Common myeloid progenitor, CD34-positive (primary cell): ENCODE measurements at regions of chr6 and their contacts with region 1.

Region 1: GRCh38 chr6:25053875-25054371 is 118.2 kb upstream of the RIPOR2 start:
- DNase-seq: peak in 2 of 3 donors; percentile 71 to 77
- H3K4me3 ChIP-seq: peak overlapping the region in 2 of 7 experiments; percentile 4 to 23
- H3K27ac ChIP-seq: no peak overlapping the region
- H3K4me1 ChIP-seq: peaks cover 47 to 94% (median 83%) of the 10 kb centered on the region in 4 experiments
- H3K27me3 ChIP-seq: no peaks in the 10 kb centered on the region

Region 2: DNA sequence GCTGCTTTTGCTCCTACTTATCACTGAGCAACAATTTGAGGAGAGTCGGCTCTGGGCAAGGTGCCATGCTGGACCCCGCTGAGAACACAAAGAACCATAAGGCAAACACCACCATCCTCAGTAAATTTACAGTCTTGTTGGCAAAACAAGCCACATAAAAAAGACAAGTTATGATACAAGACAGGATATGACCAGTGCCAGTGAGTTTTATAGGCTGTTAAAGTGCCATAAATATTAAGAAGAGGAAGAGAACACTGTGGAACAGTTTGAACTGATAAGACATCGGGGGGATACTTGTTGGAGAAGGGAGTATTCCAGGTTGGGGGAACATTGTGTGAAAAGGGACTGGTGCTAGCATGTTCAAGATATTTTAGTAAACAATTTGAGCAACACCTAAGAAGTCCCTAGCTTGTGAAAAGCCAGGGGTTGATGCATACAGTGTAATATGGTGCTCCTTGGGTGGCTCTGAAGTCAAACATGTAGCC is 92.9 kb before region 1 on chr6:
- CTCF ChIA-PET with region 1: no interaction called
- POLR2A ChIA-PET with region 1: no interaction called
- DNase-seq: peak in 2 of 3 donors; percentile 51 to 71
- H3K4me3 ChIP-seq: peak overlapping the region in 1 of 7 experiments; percentile 54
- H3K27ac ChIP-seq: peak overlapping the region in 1 of 2 experiments; percentile 70
- H3K4me1 ChIP-seq: peaks cover 9 to 46% (median 39%) of the 10 kb centered on the region in 4 experiments
- H3K27me3 ChIP-seq: no peaks in the 10 kb centered on the region

Region 3: GRCh38 chr6:25035527-25036435 is 18.1 kb before region 1 on chr6:
- CTCF ChIA-PET with region 1: interaction called, 63 read pairs
- POLR2A ChIA-PET with region 1: interaction called, 4 read pairs
- DNase-seq: peak; percentile 68 to 91 (median 84)
- H3K4me3 ChIP-seq: peak overlapping the region in 6 of 7 experiments; percentile 26 to 80 (median 62)
- H3K27ac ChIP-seq: peak overlapping the region; percentile 73 to 85
- H3K4me1 ChIP-seq: peaks cover 41 to 80% (median 60%) of the 10 kb centered on the region in 4 experiments
- H3K27me3 ChIP-seq: no peaks in the 10 kb centered on the region